Breast epithelium (tissue), 4 donors: ENCODE measurements at regions of chr9 and their contacts with region 1.

Region 1: DNA sequence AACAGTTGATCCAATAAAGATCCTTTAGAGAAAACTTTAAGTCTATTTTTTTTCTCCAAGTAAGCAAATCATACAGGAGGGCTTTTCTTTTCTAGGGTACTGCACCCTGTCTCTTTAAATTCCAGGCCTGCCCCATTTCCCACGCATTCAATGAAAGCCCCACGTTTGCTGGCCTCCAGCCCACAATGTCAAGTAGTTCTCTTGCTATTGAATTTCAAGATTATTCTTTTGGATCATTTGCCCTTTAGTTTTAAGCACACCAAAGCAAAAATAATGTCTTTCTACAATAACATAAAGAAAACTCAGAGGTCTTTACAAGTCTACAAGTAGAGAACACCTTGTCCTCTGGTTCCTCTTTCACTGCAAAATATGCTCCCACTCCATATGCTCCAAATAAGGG is 15.6 kb downstream of the MLLT3 start:
- DNase-seq: no peak
- H3K4me3 ChIP-seq: no peak overlapping the region
- H3K27ac ChIP-seq: no peak overlapping the region
- H3K4me1 ChIP-seq: no peaks in the 10 kb centered on the region
- H3K27me3 ChIP-seq: no peaks in the 10 kb centered on the region
- CTCF ChIP-seq: no peak
- POLR2A ChIP-seq: no peak

Region 2: DNA sequence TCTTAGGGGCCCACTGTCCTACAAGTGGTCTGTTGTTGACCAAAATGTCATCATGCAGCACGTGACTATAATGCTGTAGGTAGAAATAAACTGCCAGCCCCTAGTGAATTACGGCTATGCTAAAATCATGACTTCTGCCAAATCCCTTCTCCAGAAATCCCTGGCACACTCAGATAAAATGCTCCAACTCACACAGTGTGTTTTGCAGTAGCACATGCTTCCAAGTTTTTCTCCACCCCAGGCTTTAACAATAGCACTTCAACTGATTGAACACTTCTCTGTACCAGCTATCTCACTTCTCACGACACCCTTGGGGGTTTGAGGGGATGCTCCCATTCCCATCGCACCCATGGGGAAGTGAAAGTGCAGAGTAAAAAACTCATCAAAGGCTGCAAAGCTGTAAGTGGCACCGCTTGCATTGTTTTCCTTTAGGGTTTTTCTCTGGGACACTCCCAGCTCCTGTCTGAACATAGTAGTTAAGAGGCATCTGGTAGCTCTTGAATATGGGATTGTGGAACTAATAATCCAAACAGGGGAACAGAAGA is 666.8 kb before region 1 on chr9:
- intact Hi-C with region 1: loop called (anchors 5 kb)
- DNase-seq: no peak
- H3K4me3 ChIP-seq: no peak overlapping the region
- H3K27ac ChIP-seq: no peak overlapping the region
- H3K4me1 ChIP-seq: no peaks in the 10 kb centered on the region
- H3K27me3 ChIP-seq: no peaks in the 10 kb centered on the region
- CTCF ChIP-seq: no peak
- POLR2A ChIP-seq: no peak